Tibial artery (tissue), 4 donors: ENCODE measurements at regions of chr13 and their contacts with region 1.

Region 1: DNA sequence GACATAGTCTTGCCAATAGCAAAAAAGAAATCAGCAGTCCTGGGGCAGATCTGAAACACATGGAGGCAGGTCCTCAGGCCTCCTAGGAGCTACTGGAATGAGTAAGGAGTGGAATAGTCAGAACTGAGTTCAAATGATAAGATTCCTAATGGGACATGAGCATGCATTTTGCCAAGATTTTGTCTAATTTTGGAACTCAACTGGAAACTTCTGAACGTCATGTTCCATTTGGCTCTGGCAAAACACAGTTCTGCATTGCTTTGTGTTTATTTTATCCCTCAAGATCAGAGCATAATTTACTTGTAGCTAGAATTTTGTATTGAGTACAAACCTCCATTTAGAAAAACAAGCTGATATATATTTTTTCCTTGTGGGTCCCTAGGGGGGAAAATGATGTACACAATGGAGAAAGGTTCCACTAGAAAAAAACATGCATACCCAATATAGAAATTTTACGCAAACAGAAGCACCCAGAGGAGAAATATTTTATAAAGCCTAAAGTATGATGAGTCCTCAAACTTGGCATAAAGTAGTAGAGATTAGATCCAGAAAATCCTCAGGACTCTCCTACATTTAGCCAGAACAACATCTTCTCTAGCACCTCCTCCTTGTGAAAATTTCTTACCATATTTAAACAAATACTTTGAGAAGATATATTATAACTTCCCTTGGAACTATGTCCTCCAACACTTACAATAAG is 149.0 kb upstream of the SERP2 start:
- DNase-seq: peak; percentile 74 to 85
- H3K4me3 ChIP-seq: no peak overlapping the region
- H3K27ac ChIP-seq: peak overlapping the region; percentile 84 to 89
- H3K4me1 ChIP-seq: peaks cover 0 to 85% (median 34%) of the 10 kb centered on the region in 4 donors
- H3K27me3 ChIP-seq: no peaks in the 10 kb centered on the region
- CTCF ChIP-seq: peak in 1 of 2 experiments; percentile 29

Region 2: DNA sequence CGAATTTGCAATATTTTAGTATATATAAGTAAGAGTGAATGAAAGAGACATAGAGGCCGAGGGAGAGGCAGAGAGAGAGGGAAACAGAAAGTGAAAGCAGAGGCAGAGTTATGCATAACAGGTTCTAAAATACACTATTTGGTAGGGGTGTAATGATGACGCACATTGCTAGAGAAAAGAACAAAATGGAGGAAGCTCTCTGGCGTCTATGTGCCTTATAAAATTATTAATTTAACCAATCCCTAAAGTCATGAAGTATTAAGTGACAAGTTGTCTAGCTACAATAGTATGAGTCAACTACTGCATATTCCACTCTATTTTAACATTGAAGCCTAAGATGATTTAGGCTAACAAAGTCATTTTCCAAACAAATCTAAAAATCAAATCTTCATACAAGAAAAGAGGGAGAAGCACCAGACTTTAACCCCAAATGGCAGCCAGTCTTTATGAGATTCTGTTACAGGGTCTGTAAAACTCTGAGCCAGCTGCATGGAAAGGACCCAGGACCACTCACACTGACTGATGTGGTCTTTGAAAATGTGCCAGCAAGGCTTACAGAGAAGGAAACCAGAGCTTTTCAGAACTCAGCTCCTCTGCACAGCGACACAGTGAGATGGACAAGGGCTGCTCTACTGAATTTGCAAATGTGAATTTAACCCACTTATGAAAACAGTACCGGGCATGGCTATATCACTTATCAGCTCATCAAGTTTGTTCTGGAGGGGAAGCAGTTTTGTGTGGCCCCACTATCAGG is 50.0 kb after region 1 on chr13:
- intact Hi-C with region 1: loop called (anchors 5 kb)
- DNase-seq: no peak
- H3K4me3 ChIP-seq: peak overlapping the region; percentile 4 to 24
- H3K27ac ChIP-seq: peak overlapping the region; percentile 79 to 83
- H3K4me1 ChIP-seq: peaks cover 0 to 63% (median 42%) of the 10 kb centered on the region in 4 donors
- H3K27me3 ChIP-seq: no peaks in the 10 kb centered on the region
- CTCF ChIP-seq: no peak

Region 3: GRCh38 chr13:46031581-46032263 is 1807.1 kb after region 1 on chr13:
- intact Hi-C with region 1: no loop called
- DNase-seq: no peak
- H3K4me3 ChIP-seq: no peak overlapping the region
- H3K27ac ChIP-seq: no peak overlapping the region
- H3K4me1 ChIP-seq: no peaks in the 10 kb centered on the region
- H3K27me3 ChIP-seq: no peaks in the 10 kb centered on the region
- CTCF ChIP-seq: no peak